ENCODE measurements at regions of chr1 and their contacts with region 1.

Region 1: GRCh38 chr1:84298328-84298683 is 3.2 kb upstream of the SAMD13 start:
- DNase-seq: no peak
- ATAC-seq: peak; percentile 63
- H3K4me3 ChIP-seq: peak overlapping the region; percentile 70 to 74
- H3K27ac ChIP-seq: peak overlapping the region; percentile 93
- H3K4me1 ChIP-seq: peaks cover 29 to 55% of the 10 kb centered on the region in 2 experiments
- H3K27me3 ChIP-seq: no peaks in the 10 kb centered on the region
- CTCF ChIP-seq: no peak
- POLR2A ChIP-seq: no peak
- RAD21 ChIP-seq: no peak

Region 2: DNA sequence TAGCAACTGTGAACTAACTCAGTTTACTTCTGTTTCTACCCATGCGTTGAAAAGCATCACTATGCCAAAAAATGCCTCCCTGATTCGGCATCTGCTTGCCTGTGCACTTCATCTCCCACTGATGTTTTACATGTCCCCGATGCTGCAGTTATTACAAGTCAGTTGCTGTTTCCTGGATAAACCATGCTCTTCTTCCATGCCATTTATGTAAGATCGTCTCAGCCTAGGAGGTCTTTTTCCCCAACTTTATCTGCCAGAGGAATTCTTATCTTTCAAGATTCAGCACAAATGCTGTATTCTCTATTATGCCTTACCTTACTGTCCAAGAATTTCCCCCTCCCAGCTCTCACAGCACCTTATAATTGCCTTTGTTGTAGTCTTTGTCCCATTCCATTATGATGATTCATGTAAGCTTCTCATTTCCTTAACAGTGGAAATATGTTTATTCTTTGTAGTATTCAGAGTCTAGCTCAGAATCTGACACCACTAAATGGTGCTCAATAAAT is 124.2 kb before region 1 on chr1:
- CTCF ChIA-PET with region 1: no interaction called
- POLR2A ChIA-PET with region 1: interaction called, 4 read pairs
- RAD21 ChIA-PET with region 1: no interaction called
- intact Hi-C with region 1: loop called (anchors 5 kb)
- DNase-seq: peak; percentile 94
- ATAC-seq: peak; percentile 90
- H3K4me3 ChIP-seq: peak overlapping the region; percentile 33 to 45
- H3K27ac ChIP-seq: peak overlapping the region; percentile 99
- H3K4me1 ChIP-seq: peaks cover 89 to 97% of the 10 kb centered on the region in 2 experiments
- H3K27me3 ChIP-seq: no peaks in the 10 kb centered on the region
- CTCF ChIP-seq: no peak
- POLR2A ChIP-seq: no peak
- RAD21 ChIP-seq: peak; percentile 39

Region 3: GRCh38 chr1:84253891-84254290 is 44.4 kb before region 1 on chr1:
- CTCF ChIA-PET with region 1: no interaction called
- POLR2A ChIA-PET with region 1: interaction called, 11 read pairs
- RAD21 ChIA-PET with region 1: no interaction called
- intact Hi-C with region 1: loop called (anchors 5 kb)
- DNase-seq: peak; percentile 98
- ATAC-seq: peak; percentile 96
- H3K4me3 ChIP-seq: 0 out of 4 replicates have a peak overlapping the region, but pooled peaks of 1 of the 2 experiments have one; percentile 5
- H3K27ac ChIP-seq: peak overlapping the region; percentile 74
- H3K4me1 ChIP-seq: peaks cover 31 to 41% of the 10 kb centered on the region in 2 experiments
- H3K27me3 ChIP-seq: no peaks in the 10 kb centered on the region
- CTCF ChIP-seq: no peak
- POLR2A ChIP-seq: no peak
- RAD21 ChIP-seq: peak; percentile 62

Region 4: GRCh38 chr1:84271441-84272151 is 26.7 kb before region 1 on chr1:
- CTCF ChIA-PET with region 1: no interaction called
- POLR2A ChIA-PET with region 1: no interaction called
- RAD21 ChIA-PET with region 1: no interaction called
- intact Hi-C with region 1: loop called (anchors 2 kb)
- DNase-seq: no peak
- ATAC-seq: peak; percentile 60
- H3K4me3 ChIP-seq: peak overlapping the region in 1 of 2 experiments; percentile 2; a peak in 1 of 4 replicates
- H3K27ac ChIP-seq: peak overlapping the region; percentile 89
- H3K4me1 ChIP-seq: peaks cover 46 to 48% of the 10 kb centered on the region in 2 experiments
- H3K27me3 ChIP-seq: no peaks in the 10 kb centered on the region
- CTCF ChIP-seq: no peak
- POLR2A ChIP-seq: no peak
- RAD21 ChIP-seq: no peak

Region 5: DNA sequence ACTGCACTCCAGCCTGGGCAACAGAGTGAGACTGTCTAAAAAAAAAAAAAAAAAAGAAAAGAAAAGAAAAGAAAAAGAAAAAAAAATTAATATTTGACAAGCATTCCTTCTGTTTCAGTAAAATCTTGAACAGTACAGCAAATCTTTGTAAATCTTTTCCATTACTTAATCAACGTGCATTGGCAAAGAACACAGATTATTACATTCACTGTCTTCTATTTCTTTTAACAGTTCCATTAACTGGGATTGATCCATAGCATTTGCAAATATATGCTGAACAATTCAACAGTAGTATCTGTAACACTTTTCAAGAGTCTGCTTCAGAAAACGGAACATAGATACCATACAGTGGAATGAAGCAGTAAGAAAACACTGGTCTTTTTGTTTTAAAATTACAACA is 13.0 kb after region 1 on chr1:
- CTCF ChIA-PET with region 1: no interaction called
- POLR2A ChIA-PET with region 1: interaction called, 3 read pairs
- RAD21 ChIA-PET with region 1: no interaction called
- intact Hi-C with region 1: loop called (anchors 1 kb)
- DNase-seq: no peak
- ATAC-seq: no peak
- H3K4me3 ChIP-seq: no peak overlapping the region
- H3K27ac ChIP-seq: no peak overlapping the region
- H3K4me1 ChIP-seq: no peaks in the 10 kb centered on the region; a peak in 1 of 4 replicates
- H3K27me3 ChIP-seq: no peaks in the 10 kb centered on the region
- CTCF ChIP-seq: no peak
- POLR2A ChIP-seq: no peak
- RAD21 ChIP-seq: no peak

Region 6: DNA sequence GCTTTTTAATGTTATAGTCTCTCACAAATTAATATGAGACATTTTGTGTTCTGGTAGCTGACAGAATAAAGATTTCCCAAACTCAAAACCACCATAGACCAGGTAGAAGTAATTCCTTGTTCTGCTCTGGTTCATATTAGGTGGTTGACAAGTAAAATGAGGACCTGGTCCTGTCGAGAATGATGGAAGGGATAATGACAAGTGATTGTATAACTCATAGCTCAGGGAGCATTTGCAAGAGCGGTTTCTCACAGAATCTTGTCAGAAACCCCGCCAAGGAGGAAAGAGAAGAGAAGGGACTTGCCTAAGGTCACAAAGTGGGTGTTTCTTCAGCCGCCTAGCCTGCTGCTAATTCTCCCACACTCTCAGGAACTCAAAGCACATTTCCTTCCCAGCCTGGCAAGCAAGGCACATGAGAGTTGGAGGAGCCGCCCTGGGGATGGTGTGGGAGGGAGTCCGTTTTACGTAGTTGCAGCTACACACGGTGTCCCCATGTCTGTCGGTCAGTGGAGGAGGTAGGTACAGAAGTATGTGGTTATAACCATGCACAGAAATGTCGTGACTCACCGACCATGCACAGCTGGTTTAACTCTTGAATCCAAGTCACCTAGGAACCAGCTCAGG is 49.7 kb after region 1 on chr1:
- CTCF ChIA-PET with region 1: no interaction called
- POLR2A ChIA-PET with region 1: interaction called, 7 read pairs
- RAD21 ChIA-PET with region 1: interaction called in 1 of 2 experiments, 3 read pairs
- intact Hi-C with region 1: loop called (anchors 2 kb)
- DNase-seq: peak; percentile 94
- ATAC-seq: peak; percentile 90
- H3K4me3 ChIP-seq: peak overlapping the region; percentile 24 to 48
- H3K27ac ChIP-seq: peak overlapping the region; percentile 97
- H3K4me1 ChIP-seq: peaks cover 79 to 82% of the 10 kb centered on the region in 2 experiments
- H3K27me3 ChIP-seq: no peaks in the 10 kb centered on the region
- CTCF ChIP-seq: no peak
- POLR2A ChIP-seq: peak; percentile 60
- RAD21 ChIP-seq: peak; percentile 33; the same call in 1 of the 2 replicates

Region 7: DNA sequence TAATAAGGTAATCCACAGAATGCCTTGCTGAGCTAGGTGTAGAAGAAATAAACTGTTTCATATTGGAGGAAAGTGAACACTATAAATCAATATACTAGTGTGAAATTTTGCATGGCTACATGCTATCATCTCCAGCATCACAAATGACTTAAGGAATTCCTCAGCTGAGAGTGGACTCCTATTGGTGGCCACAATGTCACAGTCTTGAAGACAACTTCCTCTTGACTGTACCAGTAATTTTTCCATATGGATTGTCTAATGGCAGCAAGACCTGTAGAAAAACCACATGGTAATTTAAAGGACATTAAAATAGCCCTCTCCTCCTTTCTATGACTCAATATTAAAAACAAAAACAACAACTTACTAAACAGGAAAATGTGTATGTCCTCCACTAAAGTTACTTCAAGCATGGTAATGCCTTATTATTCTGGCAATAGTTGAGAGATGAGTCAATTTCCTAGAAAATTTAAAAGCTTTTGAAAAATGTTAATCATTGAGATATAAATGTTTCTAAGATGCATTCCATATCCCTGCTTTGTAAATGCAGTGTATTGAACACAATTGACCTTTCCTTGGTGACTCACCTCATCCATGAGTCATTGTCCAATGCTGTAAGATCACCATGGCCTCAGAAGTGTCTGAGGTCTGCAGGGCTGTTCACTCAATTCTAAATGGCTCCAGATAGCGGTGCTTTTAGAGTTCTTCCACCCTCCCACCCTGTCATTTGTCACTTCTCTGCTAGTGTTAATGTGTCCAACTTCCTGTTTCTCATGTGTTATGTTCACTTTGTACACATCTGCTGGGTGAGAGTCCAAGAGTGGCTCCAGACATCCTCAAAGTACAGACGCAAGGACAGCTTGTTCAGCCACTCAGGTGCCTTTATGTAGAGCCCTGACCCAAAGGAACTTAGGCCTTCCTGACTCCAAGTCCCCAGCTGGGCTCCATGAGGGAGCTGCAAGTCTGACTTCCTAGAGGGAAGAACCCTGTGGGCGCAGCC is 67.2 kb after region 1 on chr1:
- CTCF ChIA-PET with region 1: no interaction called
- POLR2A ChIA-PET with region 1: interaction called, 9 read pairs
- RAD21 ChIA-PET with region 1: interaction called in 1 of 2 experiments, 3 read pairs
- intact Hi-C with region 1: loop called (anchors 2 kb)
- DNase-seq: peak; percentile 99
- ATAC-seq: peak; percentile 87
- H3K4me3 ChIP-seq: peak overlapping the region in 1 of 2 experiments; percentile 1; a peak in 1 of 4 replicates
- H3K27ac ChIP-seq: peak overlapping the region; percentile 99
- H3K4me1 ChIP-seq: peaks cover 38 to 63% of the 10 kb centered on the region in 2 experiments
- H3K27me3 ChIP-seq: no peaks in the 10 kb centered on the region
- CTCF ChIP-seq: no peak
- POLR2A ChIP-seq: peak; percentile 8
- RAD21 ChIP-seq: peak; percentile 40; the same call in 1 of the 2 replicates

Region 8: GRCh38 chr1:84492726-84493125 is 194.4 kb after region 1 on chr1:
- CTCF ChIA-PET with region 1: no interaction called
- POLR2A ChIA-PET with region 1: no interaction called
- RAD21 ChIA-PET with region 1: no interaction called
- intact Hi-C with region 1: no loop called
- DNase-seq: no peak
- ATAC-seq: no peak
- H3K4me3 ChIP-seq: no peak overlapping the region
- H3K27ac ChIP-seq: no peak overlapping the region
- H3K4me1 ChIP-seq: no peaks in the 10 kb centered on the region
- H3K27me3 ChIP-seq: no peaks in the 10 kb centered on the region
- CTCF ChIP-seq: no peak
- POLR2A ChIP-seq: no peak
- RAD21 ChIP-seq: no peak

Measured in HCT116 (cell line).